ENCODE measurements at regions of chr11 and their contacts with region 1.

Region 1: DNA sequence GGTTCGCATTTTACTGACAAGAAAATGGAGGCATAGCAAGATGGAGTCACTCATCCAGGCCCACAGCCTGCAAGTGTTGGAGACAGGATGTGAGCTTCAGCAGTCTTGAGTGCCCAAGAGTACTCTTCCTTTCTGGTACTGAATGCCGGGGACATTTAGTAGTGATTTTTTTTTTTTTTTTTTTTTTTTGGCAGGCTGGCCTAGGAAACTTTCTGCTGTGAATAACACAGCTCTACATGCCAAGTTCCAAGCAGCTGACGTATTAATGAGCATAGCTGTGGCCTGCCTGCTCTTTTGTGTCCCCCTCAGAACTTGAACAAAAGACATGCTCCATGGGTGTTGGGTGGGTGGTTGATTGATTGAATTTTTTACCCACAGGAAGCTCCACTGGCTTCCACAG is 195.5 kb upstream of the CADM1 start:
- DNase-seq: no peak
- H3K4me3 ChIP-seq: no peak overlapping the region
- H3K27ac ChIP-seq: peak overlapping the region; percentile 44 to 64 (median 58)
- H3K4me1 ChIP-seq: peaks cover 18 to 44% (median 32%) of the 10 kb centered on the region in 4 donors
- H3K27me3 ChIP-seq: no peaks in the 10 kb centered on the region
- CTCF ChIP-seq: no peak
- EP300 ChIP-seq: no peak
- POLR2A ChIP-seq: no peak

Region 2: DNA sequence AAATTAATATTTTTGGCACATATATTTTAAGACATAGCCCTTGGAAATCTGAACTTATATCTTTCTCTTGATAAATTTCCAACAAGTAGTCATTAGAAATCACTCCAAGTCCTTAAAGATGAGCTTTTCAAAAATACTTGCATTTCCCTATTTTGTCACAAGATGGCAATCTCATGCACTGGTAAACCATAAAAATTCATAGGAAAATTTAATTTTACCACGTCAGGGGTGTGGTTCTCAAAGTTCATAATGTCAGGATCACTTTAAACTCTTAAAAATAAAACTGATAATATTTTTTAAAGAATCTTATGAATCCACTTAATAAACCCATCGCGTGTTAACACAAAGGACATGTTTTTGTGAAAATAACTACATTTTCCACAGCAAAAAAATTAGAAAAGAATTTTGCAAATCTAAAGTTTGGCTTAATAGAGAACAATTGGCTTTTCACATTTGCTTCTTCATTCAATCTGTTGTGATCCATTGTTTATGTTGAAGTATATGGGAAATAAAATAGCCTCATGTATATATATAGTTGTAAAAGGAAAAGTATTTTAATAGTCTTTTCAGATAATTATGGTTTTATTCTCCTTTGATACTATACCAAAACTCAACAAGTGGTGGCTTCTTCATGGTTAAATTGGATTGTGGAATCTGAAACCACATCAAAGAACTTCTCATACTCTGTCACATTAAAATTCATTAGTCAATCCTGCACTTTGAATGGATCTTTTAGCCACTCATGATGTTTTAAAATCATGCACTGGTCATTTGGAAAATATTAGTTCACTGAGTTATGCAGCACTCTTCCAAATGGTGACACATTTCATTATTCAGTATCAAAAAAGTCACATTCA is 364.6 kb before region 1 on chr11:
- intact Hi-C with region 1: loop called (anchors 10 kb)
- DNase-seq: no peak
- H3K4me3 ChIP-seq: no peak overlapping the region
- H3K27ac ChIP-seq: no peak overlapping the region
- H3K4me1 ChIP-seq: no peaks in the 10 kb centered on the region
- H3K27me3 ChIP-seq: no peaks in the 10 kb centered on the region
- CTCF ChIP-seq: peak; percentile 69 to 79 (median 72)
- EP300 ChIP-seq: no peak
- POLR2A ChIP-seq: no peak

Region 3: DNA sequence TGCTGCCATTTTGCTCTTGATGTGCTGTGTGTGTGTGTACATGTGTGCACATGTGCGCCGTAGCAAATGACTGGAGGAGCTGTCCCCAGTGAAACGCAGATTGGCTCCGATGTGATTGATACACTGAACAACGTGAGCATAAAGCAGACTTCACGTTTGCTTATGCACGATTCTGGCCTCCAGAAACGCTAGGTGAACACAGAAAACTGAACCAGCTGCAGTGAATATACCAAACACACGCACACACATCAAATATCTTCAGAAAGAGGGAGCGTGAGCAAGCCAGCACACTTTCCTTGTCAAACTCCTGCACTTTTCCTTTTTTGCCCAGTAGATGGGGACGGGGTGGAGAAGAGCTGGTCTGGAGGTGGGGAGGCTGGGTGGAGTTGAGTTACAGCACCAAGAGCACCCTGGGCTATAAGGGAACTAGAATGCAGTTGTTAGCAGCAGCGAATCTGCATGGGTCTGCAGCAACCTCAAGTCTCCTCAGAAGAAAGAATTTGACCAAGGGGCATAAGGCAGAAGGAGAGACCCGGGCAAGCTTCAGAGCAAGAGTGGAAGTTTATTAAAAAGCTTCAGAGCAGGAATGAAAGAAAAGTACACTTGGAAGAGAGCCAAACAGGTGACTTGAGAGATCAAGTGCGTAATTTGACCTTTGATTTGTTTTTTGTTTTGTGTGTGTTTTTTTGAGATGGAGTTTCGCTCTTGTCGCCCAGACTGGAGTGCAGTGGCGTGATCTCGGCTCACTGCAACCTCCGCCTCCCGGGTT is 117.7 kb before region 1 on chr11:
- intact Hi-C with region 1: no loop called
- DNase-seq: no peak
- H3K4me3 ChIP-seq: no peak overlapping the region
- H3K27ac ChIP-seq: no peak overlapping the region
- H3K4me1 ChIP-seq: peaks cover 0 to 6% (median 4%) of the 10 kb centered on the region in 4 donors
- H3K27me3 ChIP-seq: no peaks in the 10 kb centered on the region
- CTCF ChIP-seq: no peak
- EP300 ChIP-seq: no peak
- POLR2A ChIP-seq: no peak

Measured in esophagus muscularis mucosa (tissue), 4 donors.